ENCODE measurements at regions of chr2 and their contacts with region 1.

Region 1: DNA sequence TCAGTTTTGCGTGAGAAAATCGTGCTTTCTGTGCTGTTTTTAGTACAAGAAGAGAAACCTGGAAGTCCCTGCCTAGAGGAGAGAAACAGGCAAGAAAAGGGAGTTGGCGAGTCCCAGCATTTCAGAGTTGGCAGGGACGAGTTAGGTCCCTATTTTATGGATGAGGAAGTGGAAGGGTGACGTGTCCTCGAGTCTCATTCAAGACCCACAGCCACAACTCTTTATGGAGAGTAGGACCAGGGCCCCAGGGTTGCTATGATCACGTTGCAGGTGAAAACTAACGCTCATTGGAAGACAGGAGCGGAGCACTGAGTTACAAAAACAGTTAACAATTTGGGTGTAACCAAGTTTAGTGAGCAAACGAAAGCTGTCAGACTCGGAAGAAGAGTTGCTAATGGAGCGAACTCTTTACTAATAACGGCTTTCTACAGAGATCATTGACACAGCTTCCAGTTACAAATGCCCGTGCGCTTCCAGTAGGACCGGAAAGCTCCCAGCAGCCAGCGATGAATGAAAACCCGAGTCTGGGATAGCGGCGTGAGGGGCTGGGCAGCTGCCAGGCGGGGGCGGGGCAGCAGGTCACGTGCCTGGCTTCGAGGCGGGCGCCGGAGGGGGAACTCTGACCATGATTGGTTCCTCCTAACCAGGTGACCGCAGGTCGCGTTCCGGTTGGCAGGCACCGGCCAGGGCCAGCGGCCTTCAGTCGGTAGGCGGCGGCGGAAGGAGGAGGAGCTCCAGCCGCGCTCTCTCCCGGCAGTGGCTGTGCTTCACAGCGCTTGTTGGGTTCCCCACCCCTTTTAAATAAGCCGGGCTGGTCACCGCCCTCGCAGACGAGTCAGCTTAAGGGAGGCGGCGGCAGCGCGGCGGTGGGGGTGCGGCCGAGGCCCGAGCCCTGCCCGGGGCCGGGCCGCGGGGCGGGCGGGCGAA is at the start of gene CCNYL1:
- DNase-seq: peak; percentile 99
- ATAC-seq: peak; percentile 98
- H3K4me3 Mint-ChIP-seq: peak within 1 kb of the TSS; percentile 99
- H3K27ac Mint-ChIP-seq: peak within 1 kb of the TSS; percentile 94
- H3K4me1 Mint-ChIP-seq: peaks cover 27% of the 10 kb centered on the region
- H3K27me3 Mint-ChIP-seq: no peaks in the 10 kb centered on the region
- CTCF ChIP-seq: no peak
- total RNA-seq, gene CCNYL1: 26.6 to 31.6 TPM (median 28.1 TPM) in 3 replicates

Region 2: DNA sequence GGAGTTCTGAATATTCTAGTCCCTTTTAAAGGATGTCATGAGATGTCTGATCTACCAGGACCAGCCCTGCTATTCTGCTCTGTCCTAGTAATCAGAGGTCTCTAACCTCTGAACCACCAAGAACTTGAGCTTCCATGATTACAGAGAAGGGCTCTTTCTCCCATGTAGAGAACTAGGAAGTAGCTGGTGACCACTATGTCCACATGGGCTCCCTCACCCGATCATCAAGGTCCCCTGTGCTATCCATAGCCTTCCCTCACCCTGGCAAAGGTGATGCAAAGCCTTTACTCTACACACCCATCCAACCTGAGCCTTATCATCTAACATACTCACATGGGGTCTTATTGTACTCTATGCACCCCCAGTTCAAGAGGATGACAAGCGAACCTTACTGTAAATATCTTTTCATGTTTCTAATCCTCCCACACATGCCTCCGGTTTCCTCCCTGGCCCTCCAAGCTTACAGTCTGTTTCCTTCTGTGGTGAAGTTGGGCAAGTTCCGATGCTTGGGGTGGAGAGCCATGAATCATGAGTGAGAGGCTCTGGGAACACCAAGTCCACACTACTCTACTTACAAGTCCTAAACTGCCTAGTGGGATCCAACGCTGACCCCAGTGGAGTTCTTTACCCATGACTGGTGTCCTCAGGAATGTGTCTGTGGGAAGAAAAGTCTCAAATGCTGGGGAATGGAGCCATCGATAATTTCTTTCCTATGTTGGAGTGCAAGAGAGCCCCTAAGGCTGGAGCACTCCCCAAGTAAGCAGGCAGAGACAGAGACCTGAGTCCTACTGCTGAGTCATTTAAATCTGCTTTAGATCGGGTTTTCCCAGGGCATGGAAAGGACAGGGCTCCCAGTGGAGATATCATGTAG is 472.0 kb before region 1 on chr2:
- CTCF ChIA-PET with region 1: no interaction called
- POLR2A ChIA-PET with region 1: no interaction called
- DNase-seq: no peak
- ATAC-seq: no peak
- H3K4me3 Mint-ChIP-seq: no peak overlapping the region
- H3K27ac Mint-ChIP-seq: no peak overlapping the region
- H3K4me1 Mint-ChIP-seq: peaks cover 17% of the 10 kb centered on the region
- H3K27me3 Mint-ChIP-seq: peaks cover 6% of the 10 kb centered on the region
- CTCF ChIP-seq: no peak

Region 3: DNA sequence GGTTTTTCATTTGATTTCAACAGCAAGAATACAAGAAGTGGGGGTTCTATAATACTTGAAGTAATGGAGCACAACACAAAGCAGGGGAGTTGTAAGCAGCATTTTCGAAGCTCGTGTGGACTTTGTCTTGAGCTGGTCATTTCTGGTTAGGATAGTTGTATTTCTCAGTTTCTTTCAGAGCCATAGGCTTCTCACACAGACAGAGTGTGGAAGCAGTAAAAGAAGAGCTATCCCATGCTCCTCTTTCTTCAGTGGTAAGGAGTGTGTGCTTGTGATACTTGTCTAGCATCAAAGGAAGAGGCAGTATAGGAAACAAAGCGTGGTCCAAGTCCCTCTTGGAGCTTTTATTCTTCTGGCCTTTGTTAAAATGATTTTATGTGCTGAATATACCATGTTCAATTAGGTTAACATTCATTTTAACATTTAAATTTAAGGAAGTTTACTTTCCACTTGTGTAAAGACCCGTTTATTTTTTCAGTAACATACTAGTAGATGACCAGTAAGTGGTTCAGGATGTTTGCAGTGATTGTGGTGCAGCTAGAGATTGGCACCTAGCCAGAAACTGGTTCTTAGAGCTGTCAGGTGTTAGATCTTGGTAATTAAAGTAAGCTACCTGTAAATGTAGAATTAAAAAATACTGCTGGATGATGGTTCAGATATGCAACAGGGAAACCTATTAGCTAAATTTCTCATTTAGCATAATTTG is 14.9 kb after region 1 on chr2:
- CTCF ChIA-PET with region 1: interaction called, 7 read pairs
- POLR2A ChIA-PET with region 1: interaction called, 10 read pairs
- DNase-seq: no peak
- ATAC-seq: no peak
- H3K4me3 Mint-ChIP-seq: no peak overlapping the region
- H3K27ac Mint-ChIP-seq: peak overlapping the region; percentile 57
- H3K4me1 Mint-ChIP-seq: peaks cover 17% of the 10 kb centered on the region
- H3K27me3 Mint-ChIP-seq: no peaks in the 10 kb centered on the region
- CTCF ChIP-seq: no peak

Measured in WTC11 (cell line).